ENCODE measurements at regions of chr6 and their contacts with region 1.

Region 1: DNA sequence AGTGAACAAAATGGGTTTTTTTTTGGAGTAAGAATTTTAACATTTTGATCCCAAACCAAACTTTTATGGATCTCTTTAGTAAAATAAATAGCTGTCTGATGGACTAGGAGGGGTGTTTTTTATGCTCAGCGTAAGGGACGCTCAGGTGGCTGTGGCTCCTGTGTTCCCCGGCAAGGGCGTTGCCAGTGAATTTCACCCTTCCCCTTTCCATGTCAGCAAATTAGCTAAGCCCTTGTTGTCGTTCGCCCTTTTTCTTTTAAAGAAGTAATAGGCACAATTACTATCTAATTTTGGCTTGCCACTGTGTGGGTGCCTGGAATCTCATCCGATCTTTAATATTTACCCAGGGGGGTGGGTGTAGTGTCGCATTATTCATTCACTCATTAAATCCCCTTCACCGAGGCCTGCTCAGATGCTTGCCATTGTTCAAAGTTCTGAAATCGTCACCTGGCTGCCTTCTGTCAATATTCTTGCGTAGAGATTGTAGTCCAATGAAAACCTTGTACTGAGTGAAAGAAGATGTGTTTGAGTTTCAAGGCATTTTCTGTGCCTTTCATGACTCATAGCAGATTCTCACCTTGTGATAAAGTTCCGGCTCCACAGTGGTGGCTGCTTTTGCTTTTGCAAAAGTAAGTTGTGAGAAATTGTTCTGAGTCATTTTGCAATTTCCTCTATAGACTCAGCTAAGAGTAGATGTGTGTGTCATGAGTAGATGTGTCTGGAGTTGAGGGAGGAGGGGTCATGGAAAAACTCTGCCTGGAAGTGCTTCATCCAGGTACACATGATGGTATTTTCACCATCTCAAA is 40.0 kb upstream of the CLDN20 start:
- DNase-seq: peak; percentile 79
- ATAC-seq: peak; percentile 99
- H3K4me3 Mint-ChIP-seq: peak overlapping the region; percentile 10
- H3K27ac Mint-ChIP-seq: peak overlapping the region; percentile 79
- H3K4me1 Mint-ChIP-seq: peaks cover 18% of the 10 kb centered on the region
- H3K27me3 Mint-ChIP-seq: peaks cover 3% of the 10 kb centered on the region

Region 2: GRCh38 chr6:155152211-155153076 is 71.4 kb before region 1 on chr6:
- CTCF ChIA-PET with region 1: no interaction called
- POLR2A ChIA-PET with region 1: no interaction called
- intact Hi-C with region 1: no loop called
- DNase-seq: no peak
- ATAC-seq: no peak
- H3K4me3 Mint-ChIP-seq: no peak overlapping the region
- H3K27ac Mint-ChIP-seq: peak overlapping the region; percentile 90
- H3K4me1 Mint-ChIP-seq: peaks cover 68% of the 10 kb centered on the region
- H3K27me3 Mint-ChIP-seq: peaks cover 3% of the 10 kb centered on the region

Region 3: GRCh38 chr6:155260686-155261085 is 36.8 kb after region 1 on chr6:
- CTCF ChIA-PET with region 1: no interaction called
- POLR2A ChIA-PET with region 1: no interaction called
- intact Hi-C with region 1: no loop called
- DNase-seq: no peak
- ATAC-seq: no peak
- H3K4me3 Mint-ChIP-seq: no peak overlapping the region
- H3K27ac Mint-ChIP-seq: peak overlapping the region; percentile 84
- H3K4me1 Mint-ChIP-seq: peaks cover 14% of the 10 kb centered on the region
- H3K27me3 Mint-ChIP-seq: no peaks in the 10 kb centered on the region

Region 4: GRCh38 chr6:155314092-155314772 is 90.4 kb after region 1 on chr6 and contains the start of gene TFB1M:
- CTCF ChIA-PET with region 1: no interaction called
- POLR2A ChIA-PET with region 1: no interaction called
- intact Hi-C with region 1: loop called (anchors 1 kb)
- DNase-seq: peak; percentile 99
- ATAC-seq: peak; percentile 95
- H3K4me3 Mint-ChIP-seq: peak within 1 kb of the TSS; percentile 90
- H3K27ac Mint-ChIP-seq: peak within 1 kb of the TSS; percentile 98
- H3K4me1 Mint-ChIP-seq: peaks cover 39% of the 10 kb centered on the region
- H3K27me3 Mint-ChIP-seq: no peaks in the 10 kb centered on the region
- total RNA-seq, gene TFB1M: 45.5 to 56.4 TPM

Measured in activated CD4-positive, alpha-beta T cell treated with anti-CD3 and anti-CD28 coated beads for 36 hours (primary cell).